OCI-LY7 (cell line): ENCODE measurements at regions of chr19 and their contacts with region 1.

Region 1: GRCh38 chr19:2648528-2648937 is 54.0 kb downstream of the GNG7 start:
- DNase-seq: peak; percentile 84
- H3K4me3 ChIP-seq: no peak overlapping the region
- H3K27ac ChIP-seq: no peak overlapping the region
- H3K4me1 ChIP-seq: peaks cover 23% of the 10 kb centered on the region
- CTCF ChIP-seq: peak; percentile 98

Region 2: DNA sequence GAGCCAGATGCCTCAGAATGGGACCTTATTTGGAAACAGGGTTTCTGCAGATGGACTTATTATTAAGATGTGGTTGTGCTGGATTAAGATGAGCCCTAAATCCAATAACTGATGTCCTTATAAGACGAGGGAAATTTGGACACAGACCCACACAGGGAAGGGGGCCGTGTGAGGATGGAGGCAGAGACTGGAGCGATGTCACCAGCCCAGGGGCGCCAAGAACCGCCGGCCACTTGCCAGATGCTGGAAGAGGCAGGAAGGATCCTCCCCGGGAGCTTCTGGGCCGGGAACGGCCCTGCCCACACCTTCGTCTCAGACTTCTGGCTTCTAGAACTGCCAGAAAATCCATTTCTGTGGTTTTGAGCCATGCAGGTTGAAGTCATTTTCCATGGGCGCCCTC is 27.4 kb after region 1 on chr19:
- CTCF ChIA-PET with region 1: no interaction called
- POLR2A ChIA-PET with region 1: no interaction called
- intact Hi-C with region 1: no loop called
- DNase-seq: no peak
- H3K4me3 ChIP-seq: no peak overlapping the region
- H3K27ac ChIP-seq: no peak overlapping the region
- H3K4me1 ChIP-seq: peaks cover 38% of the 10 kb centered on the region
- CTCF ChIP-seq: no peak

Region 3: GRCh38 chr19:2722541-2723344 is 74.2 kb after region 1 on chr19:
- CTCF ChIA-PET with region 1: no interaction called
- POLR2A ChIA-PET with region 1: no interaction called
- intact Hi-C with region 1: no loop called
- DNase-seq: no peak
- H3K4me3 ChIP-seq: no peak overlapping the region
- H3K27ac ChIP-seq: no peak overlapping the region
- H3K4me1 ChIP-seq: peaks cover 16% of the 10 kb centered on the region
- CTCF ChIP-seq: no peak

Region 4: GRCh38 chr19:2867025-2867991 is 218.8 kb after region 1 on chr19 and contains the start of gene ZNF556:
- CTCF ChIA-PET with region 1: no interaction called
- POLR2A ChIA-PET with region 1: no interaction called
- intact Hi-C with region 1: loop called (anchors 2 kb)
- DNase-seq: peak; percentile 72
- H3K4me3 ChIP-seq: no peak within 1 kb of the TSS
- H3K27ac ChIP-seq: no peak within 1 kb of the TSS
- H3K4me1 ChIP-seq: no peaks in the 10 kb centered on the region
- CTCF ChIP-seq: no peak
- total RNA-seq, gene ZNF556: 0.09 and 0.15 TPM in 2 replicates